Activated naive CD4-positive, alpha-beta T cell treated with anti-CD3 and anti-CD28 coated beads for 36 hours (primary cell): ENCODE measurements at regions of chr11 and their contacts with region 1.

Region 1: GRCh38 chr11:66222358-66223149 is 45.9 kb upstream of the RAB1B start:
- DNase-seq: peak; percentile 98
- H3K4me3 Mint-ChIP-seq: peak overlapping the region; percentile 33
- H3K27ac Mint-ChIP-seq: peak overlapping the region; percentile 99
- H3K4me1 Mint-ChIP-seq: peaks cover 23% of the 10 kb centered on the region
- H3K27me3 Mint-ChIP-seq: no peaks in the 10 kb centered on the region

Region 2: GRCh38 chr11:66051766-66052663 is 170.5 kb before region 1 on chr11 and contains the start of gene SF3B2:
- CTCF ChIA-PET with region 1: no interaction called
- intact Hi-C with region 1: loop called (anchors 1 kb)
- DNase-seq: peak; percentile 98
- H3K4me3 Mint-ChIP-seq: peak within 1 kb of the TSS; percentile 99
- H3K27ac Mint-ChIP-seq: peak within 1 kb of the TSS; percentile 96
- H3K4me1 Mint-ChIP-seq: peaks cover 41% of the 10 kb centered on the region
- H3K27me3 Mint-ChIP-seq: peaks cover 7% of the 10 kb centered on the region
- total RNA-seq, gene SF3B2: 319 to 321 TPM

Region 3: GRCh38 chr11:66136752-66137123 is 85.8 kb before region 1 on chr11:
- CTCF ChIA-PET with region 1: no interaction called
- intact Hi-C with region 1: loop called (anchors 1 kb)
- DNase-seq: peak; percentile 47
- H3K4me3 Mint-ChIP-seq: no peak overlapping the region
- H3K27ac Mint-ChIP-seq: peak overlapping the region; percentile 66
- H3K4me1 Mint-ChIP-seq: peaks cover 66% of the 10 kb centered on the region
- H3K27me3 Mint-ChIP-seq: no peaks in the 10 kb centered on the region

Region 4: GRCh38 chr11:66258473-66258893 is 35.9 kb after region 1 on chr11:
- CTCF ChIA-PET with region 1: interaction called, 10 read pairs
- intact Hi-C with region 1: no loop called
- DNase-seq: no peak
- H3K4me3 Mint-ChIP-seq: peak overlapping the region; percentile 95
- H3K27ac Mint-ChIP-seq: peak overlapping the region; percentile 79
- H3K4me1 Mint-ChIP-seq: peaks cover 30% of the 10 kb centered on the region
- H3K27me3 Mint-ChIP-seq: no peaks in the 10 kb centered on the region

Region 5: DNA sequence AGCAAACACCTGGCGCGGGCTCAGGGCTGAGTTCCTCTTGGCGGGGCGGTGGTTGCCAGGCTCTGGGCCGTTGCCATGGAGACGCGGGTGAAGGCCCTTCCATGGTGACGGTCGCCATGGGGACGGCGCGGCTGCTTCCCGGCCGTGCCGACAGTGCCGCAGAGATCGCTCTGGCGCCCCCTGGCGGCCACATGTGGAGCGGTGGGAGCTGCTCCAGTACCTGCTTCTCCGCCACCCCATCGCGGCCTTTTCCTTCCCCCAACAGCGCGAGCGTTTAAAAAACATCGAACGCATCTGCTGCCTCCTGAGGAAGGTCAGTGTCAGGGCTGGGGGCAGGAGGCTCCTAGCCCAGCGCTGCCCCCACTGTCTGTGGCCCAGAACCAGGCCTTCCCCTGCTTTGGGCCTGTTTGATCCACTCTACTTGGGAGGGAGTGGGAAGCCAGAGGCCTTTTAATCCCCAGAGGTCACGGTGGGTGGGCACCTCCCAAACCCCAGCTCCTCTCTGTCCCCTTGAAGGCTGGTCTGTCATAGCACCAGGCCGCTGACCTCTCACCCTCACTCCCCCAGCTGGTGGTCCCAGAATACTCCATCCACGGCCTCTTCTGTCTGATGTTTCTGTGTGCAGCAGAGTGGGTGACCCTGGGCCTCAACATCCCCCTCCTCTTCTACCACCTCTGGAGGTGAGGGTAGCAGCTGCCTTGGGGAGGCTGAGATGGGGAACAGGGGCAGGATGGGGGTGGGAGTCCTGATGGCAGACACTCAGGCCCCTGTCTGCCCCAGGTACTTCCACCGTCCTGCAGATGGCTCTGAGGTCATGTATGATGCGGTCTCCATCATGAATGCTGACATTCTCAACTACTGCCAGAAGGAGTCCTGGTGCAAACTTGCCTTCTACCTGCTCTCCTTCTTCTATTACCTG is 60.2 kb after region 1 on chr11:
- CTCF ChIA-PET with region 1: interaction called, 10 read pairs
- intact Hi-C with region 1: loop called (anchors 1 kb)
- DNase-seq: peak; percentile 99
- H3K4me3 Mint-ChIP-seq: no peak overlapping the region
- H3K27ac Mint-ChIP-seq: peak overlapping the region; percentile 59
- H3K4me1 Mint-ChIP-seq: peaks cover 28% of the 10 kb centered on the region
- H3K27me3 Mint-ChIP-seq: no peaks in the 10 kb centered on the region

Region 6: DNA sequence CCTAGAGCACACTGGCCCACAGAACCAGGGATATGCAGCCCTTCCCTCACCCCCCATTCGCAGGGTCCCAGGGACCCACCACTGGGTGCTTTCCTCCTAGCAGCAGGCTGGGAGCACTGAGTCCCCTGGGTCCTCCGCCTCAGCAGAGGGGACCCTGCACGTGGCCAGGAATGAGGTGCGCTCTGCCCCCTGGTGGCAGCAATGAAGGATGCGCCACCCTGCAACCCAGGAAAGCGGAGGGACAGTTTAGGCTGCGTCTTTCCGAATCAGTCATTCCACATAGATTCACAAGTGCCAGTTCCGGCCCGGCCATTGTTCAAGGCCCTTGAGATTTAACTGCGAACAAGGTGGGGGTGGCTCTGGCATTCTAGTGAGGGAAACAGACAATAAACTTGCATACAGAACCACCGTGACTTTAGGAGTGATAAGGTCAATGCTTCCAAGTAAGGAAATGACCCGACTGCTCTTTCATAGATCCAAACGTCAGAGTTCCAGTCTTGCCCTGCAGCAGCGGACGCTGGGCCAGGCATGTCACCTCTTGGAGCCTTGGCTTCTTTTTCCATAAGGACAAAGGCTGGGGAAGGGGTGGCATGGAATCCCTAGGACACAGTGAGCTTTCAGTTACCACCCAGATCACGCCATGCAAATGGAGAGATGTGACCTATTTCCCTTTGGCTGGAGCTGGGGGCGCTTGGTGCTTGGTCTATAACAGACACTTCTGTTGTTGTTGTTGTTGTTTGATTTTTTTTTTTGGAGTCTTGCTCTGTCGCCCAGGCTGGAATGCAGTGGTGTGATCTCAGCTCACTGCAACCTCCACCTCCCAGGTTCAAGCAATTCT is 106.0 kb after region 1 on chr11:
- CTCF ChIA-PET with region 1: interaction called, 5 read pairs
- intact Hi-C with region 1: loop called (anchors 2 kb)
- DNase-seq: peak; percentile 90
- H3K4me3 Mint-ChIP-seq: peak overlapping the region; percentile 34
- H3K27ac Mint-ChIP-seq: peak overlapping the region; percentile 74
- H3K4me1 Mint-ChIP-seq: peaks cover 38% of the 10 kb centered on the region
- H3K27me3 Mint-ChIP-seq: no peaks in the 10 kb centered on the region